ENCODE measurements at regions of chr7 and their contacts with region 1.

Region 1: GRCh38 chr7:74665296-74665938 is 7.9 kb downstream of the GTF2I start:
- DNase-seq: peak; percentile 28 to 69 (median 57)
- H3K4me3 ChIP-seq: no peak overlapping the region
- H3K4me3 Mint-ChIP-seq: no peak overlapping the region
- H3K27ac ChIP-seq: peak overlapping the region in 1 of 2 donors; percentile 62
- H3K27ac Mint-ChIP-seq: peak overlapping the region; percentile 10 to 91 (median 79)
- H3K4me1 ChIP-seq: peaks cover 16 to 17% of the 10 kb centered on the region in 2 donors
- H3K4me1 Mint-ChIP-seq: peaks cover 32% of the 10 kb centered on the region
- H3K27me3 ChIP-seq: no peaks in the 10 kb centered on the region
- H3K27me3 Mint-ChIP-seq: no peaks in the 10 kb centered on the region
- CTCF ChIP-seq: no peak

Region 2: GRCh38 chr7:74612015-74612829 is 53.2 kb before region 1 on chr7:
- intact Hi-C with region 1: loop called in 1 of 2 experiments (anchors 10 kb)
- DNase-seq: no peak
- H3K4me3 ChIP-seq: no peak overlapping the region
- H3K4me3 Mint-ChIP-seq: no peak overlapping the region
- H3K27ac ChIP-seq: no peak overlapping the region
- H3K27ac Mint-ChIP-seq: peak overlapping the region in 2 of 7 donors; percentile 2 to 72
- H3K4me1 ChIP-seq: peaks cover 13 to 17% of the 10 kb centered on the region in 2 donors
- H3K4me1 Mint-ChIP-seq: peaks cover 30% of the 10 kb centered on the region
- H3K27me3 ChIP-seq: peaks cover 0 to 4% of the 10 kb centered on the region in 2 donors
- H3K27me3 Mint-ChIP-seq: peaks cover 3 to 6% (median 5%) of the 10 kb centered on the region in 3 donors
- CTCF ChIP-seq: no peak

Measured in CD14-positive monocyte (primary cell).